Activated T-helper 1 cell treated with anti-CD3 and anti-CD28 coated beads, Interleukin-12 subunit alpha, Interleukin-12 subunit beta, Interleukin-2, Interleukin-4 antibody, amounts not matched to agents 30 ng/mL and 10 ng/mL and 1 ng/mL, durations not matched to agents 14 hours and 24 hours and 36 hours (primary cell): ENCODE measurements at regions of chr1 and their contacts with region 1.

Region 1: GRCh38 chr1:23559136-23559984 is at the start of gene ID3:
- DNase-seq: peak; percentile 95
- H3K4me3 Mint-ChIP-seq: peak within 1 kb of the TSS; percentile 90
- H3K27ac Mint-ChIP-seq: peak within 1 kb of the TSS; percentile 66
- H3K4me1 Mint-ChIP-seq: peaks cover 67% of the 10 kb centered on the region
- H3K27me3 Mint-ChIP-seq: peaks cover 36% of the 10 kb centered on the region
- total RNA-seq, gene ID3: 20.8 and 22.9 TPM in 2 replicates

Region 2: GRCh38 chr1:23466423-23466989 is 92.9 kb before region 1 on chr1:
- intact Hi-C with region 1: no loop called
- DNase-seq: no peak
- H3K4me3 Mint-ChIP-seq: no peak overlapping the region
- H3K27ac Mint-ChIP-seq: no peak overlapping the region
- H3K4me1 Mint-ChIP-seq: no peaks in the 10 kb centered on the region
- H3K27me3 Mint-ChIP-seq: peaks cover 7% of the 10 kb centered on the region

Region 3: DNA sequence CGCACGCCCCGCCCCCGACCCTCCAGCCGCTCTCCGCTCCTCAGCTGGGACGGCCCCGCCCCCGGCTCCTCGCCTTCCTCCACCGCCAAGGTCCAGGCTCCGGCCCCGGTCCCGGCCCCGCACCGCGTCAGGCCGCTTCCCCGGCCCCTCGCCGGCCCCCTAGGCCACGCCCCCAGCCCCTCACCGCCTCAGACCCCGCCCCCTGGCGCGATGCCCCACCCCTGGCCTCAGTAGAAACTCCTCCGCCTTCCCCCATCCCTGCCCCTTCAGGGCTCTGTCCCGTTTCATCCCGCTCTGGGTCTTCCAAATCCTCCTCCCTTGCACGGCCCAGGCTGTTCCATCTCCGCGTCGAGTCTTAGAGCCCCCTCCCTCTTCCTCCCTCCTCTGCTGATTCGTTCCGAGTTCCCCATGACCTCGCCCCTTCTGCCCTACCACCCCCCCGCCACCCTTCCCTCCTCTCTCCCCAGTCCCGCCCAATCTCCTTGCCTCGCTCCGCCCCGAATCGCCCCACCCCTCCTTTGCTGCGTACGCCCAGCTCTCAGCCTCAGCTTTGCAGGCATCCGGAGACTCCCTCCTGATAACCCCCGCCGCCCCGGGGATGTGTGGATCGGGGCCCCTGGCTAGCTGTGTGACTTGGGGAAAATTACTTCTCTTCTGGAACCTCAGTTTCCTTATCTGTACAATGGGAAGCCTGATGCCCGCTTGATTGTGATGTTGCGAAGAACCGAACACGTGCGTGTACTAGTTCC is 74.9 kb before region 1 on chr1:
- intact Hi-C with region 1: loop called (anchors 1 kb)
- DNase-seq: peak; percentile 81
- H3K4me3 Mint-ChIP-seq: peak overlapping the region; percentile 87
- H3K27ac Mint-ChIP-seq: peak overlapping the region; percentile 44
- H3K4me1 Mint-ChIP-seq: peaks cover 16% of the 10 kb centered on the region
- H3K27me3 Mint-ChIP-seq: peaks cover 61% of the 10 kb centered on the region

Region 4: GRCh38 chr1:23539698-23540266 is 19.6 kb before region 1 on chr1:
- intact Hi-C with region 1: loop called (anchors 1 kb)
- DNase-seq: peak; percentile 90
- H3K4me3 Mint-ChIP-seq: peak overlapping the region; percentile 31
- H3K27ac Mint-ChIP-seq: peak overlapping the region; percentile 24
- H3K4me1 Mint-ChIP-seq: peaks cover 23% of the 10 kb centered on the region
- H3K27me3 Mint-ChIP-seq: no peaks in the 10 kb centered on the region

Region 5: GRCh38 chr1:23591460-23592208 is 32.3 kb after region 1 on chr1:
- intact Hi-C with region 1: loop called (anchors 1 kb)
- DNase-seq: no peak
- H3K4me3 Mint-ChIP-seq: peak overlapping the region; percentile 53
- H3K27ac Mint-ChIP-seq: peak overlapping the region; percentile 93
- H3K4me1 Mint-ChIP-seq: peaks cover 46% of the 10 kb centered on the region
- H3K27me3 Mint-ChIP-seq: peaks cover 2% of the 10 kb centered on the region

Region 6: GRCh38 chr1:23634842-23635651 is 75.7 kb after region 1 on chr1:
- intact Hi-C with region 1: loop called (anchors 1 kb)
- DNase-seq: peak; percentile 62
- H3K4me3 Mint-ChIP-seq: peak overlapping the region; percentile 2
- H3K27ac Mint-ChIP-seq: no peak overlapping the region
- H3K4me1 Mint-ChIP-seq: peaks cover 22% of the 10 kb centered on the region
- H3K27me3 Mint-ChIP-seq: peaks cover 15% of the 10 kb centered on the region